ENCODE measurements at regions of chr15 and their contacts with region 1.

Region 1: GRCh38 chr15:91302588-91303439 is 202.8 kb downstream of the SV2B start:
- DNase-seq: no peak
- ATAC-seq: peak; percentile 88

Region 2: GRCh38 chr15:91413142-91413541 is 110.3 kb after region 1 on chr15:
- intact Hi-C with region 1: no loop called
- DNase-seq: no peak
- ATAC-seq: no peak

Region 3: DNA sequence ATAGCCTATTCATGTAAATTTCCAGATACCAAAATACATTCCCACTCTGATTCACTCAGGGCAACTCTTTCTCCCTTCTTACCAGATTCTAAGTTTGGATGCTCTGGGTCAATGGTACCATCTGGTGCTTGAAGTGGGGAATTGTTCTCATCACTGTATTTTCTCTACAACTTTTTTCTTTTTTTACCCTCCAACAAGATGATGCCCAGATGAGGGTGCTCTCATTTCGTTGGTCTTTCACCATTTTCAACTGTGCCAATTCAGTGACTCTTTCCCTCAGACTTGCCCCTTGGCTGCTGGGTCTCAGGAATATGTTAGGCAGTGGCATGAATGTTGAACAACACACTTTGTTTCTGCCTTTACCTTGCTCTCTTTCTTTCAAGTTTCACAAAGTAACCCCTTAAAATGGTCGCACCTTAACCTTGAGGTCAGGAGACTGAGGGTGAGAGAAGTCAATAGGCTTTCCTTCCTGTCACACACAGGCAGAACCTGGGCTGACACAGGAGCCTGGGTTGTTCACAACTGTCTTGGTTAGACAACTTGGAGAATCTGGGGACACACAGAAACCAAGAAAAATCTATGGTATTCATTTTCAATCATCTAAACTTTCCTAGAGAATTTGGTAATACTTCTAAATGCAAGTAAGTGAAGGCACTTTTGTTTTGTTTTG is 220.0 kb after region 1 on chr15:
- intact Hi-C with region 1: loop called (anchors 5 kb)
- DNase-seq: no peak
- ATAC-seq: peak; percentile 48

Region 4: DNA sequence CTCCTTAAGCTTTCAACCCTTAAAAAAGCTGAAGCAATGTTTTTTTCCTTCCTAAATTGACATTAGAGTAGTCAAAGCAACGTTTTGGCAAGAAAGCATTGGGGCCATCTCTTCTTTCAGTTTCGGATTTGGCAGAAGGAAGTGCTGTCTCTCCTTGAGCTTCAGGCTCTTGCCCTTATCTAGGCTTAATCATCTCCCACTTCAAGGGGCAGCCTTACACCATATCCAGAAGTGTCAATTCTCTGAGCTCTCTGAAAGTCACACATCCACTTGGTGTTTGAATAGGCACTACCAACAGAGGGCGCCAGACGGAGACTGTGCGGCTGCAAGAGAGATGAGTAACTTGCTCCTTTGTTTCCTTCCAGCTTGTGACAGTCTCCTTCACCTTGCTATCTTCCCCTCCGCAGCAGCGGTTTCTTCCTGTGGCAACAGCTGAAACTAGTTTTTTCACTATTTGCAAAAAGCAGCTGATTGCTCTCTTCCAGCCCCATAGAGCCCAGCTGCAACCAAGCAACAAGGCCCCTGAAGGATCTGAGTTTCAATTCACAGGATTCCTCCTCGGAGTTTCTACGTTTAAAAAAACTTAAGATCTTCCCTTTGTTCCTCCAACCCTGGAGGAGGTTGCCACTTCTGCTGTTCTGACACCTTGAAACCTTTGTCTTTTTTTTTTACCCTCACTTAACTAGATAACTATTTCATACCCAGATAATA is 403.7 kb after region 1 on chr15:
- intact Hi-C with region 1: loop called (anchors 5 kb)
- DNase-seq: peak; percentile 68
- ATAC-seq: peak; percentile 92

Region 5: DNA sequence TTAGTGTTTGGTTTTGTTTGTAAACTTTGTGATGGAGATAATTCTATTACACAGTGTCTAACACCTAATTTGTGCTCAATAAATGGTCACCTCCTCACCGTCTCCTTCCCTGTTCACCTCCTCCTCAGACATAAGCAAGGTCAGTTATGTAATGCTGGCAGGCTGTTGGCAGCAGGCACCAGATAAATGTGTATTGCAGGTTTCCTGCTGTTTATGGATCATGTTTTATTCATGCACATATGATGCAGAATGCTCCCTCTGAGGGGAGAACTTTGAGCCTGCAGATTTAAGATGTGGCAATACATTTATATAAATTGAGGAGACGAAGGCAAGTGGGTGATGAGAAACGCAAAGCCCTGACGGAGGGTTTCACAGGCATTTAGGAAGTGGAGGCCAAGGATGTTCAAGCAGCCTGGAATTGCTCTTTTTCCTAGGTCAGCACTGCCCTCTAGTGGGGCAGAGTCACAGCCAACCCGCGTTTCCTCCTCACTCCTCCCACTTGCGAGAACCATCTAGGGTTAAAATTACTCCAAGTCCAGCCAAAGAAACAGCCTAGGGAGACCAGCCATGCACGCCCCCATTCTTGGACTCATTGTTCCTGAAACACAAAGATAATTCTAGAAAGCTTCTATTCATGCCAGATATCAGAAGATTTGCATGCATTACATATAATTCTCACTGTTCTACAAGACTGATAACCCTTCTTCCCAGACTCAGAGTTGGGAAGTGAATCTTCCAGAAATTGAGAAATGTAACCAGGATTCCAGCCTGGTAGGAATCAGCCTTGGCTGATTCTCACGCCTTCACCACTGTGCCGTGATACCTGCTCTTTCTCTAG is 779.4 kb after region 1 on chr15:
- intact Hi-C with region 1: loop called (anchors 5 kb)
- DNase-seq: peak; percentile 71
- ATAC-seq: peak; percentile 75